Posterior vena cava (tissue), 2 donors: ENCODE measurements at regions of chr1 and their contacts with region 1.

Region 1: GRCh38 chr1:111507411-111508201 is 4.2 kb upstream of the ADORA3 start:
- DNase-seq: peak; percentile 94

Region 2: DNA sequence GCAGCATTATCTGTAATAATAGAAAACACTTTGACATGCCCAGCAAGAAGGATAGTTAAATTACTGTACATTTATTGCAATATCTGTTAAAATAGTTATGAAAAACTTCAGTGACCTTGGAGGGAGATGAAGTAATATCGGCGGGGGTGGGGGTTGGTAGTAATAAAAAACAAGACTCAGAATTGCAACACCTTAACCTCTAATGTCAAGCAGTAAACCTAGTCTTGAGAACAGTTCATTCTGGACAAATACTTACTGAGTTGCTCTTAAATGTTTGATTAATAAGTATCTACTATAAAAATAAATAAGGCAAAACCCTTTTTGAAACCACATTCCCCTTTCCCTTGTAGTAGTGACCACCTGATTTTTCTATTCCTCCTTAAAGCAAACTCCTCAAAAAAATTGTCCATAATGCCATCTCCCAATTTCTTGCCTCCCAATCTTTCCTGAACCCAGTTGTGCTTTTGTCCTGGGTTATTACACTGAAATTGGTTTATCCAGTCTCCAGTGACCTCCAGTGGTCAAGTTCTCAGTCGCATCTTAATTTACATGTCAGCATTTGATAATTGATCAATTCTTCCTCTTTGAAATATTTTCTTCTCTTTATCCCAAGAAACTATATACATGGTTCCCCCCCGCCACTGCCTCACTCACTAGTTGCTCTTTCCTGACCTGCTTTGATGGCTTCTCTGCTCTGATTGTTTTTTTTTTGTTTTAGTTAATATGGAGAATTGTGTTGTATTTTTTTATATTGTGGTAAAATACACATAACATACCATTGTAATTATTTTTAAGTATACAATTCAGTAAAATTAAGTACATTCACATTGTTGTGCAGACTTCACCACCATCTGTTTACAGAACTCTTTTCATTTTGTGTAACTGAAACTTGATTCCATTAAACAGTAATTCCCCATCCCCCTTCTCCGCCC is 148.7 kb after region 1 on chr1:
- intact Hi-C with region 1: loop called in 1 of 2 experiments (anchors 5 kb)
- DNase-seq: no peak

Region 3: DNA sequence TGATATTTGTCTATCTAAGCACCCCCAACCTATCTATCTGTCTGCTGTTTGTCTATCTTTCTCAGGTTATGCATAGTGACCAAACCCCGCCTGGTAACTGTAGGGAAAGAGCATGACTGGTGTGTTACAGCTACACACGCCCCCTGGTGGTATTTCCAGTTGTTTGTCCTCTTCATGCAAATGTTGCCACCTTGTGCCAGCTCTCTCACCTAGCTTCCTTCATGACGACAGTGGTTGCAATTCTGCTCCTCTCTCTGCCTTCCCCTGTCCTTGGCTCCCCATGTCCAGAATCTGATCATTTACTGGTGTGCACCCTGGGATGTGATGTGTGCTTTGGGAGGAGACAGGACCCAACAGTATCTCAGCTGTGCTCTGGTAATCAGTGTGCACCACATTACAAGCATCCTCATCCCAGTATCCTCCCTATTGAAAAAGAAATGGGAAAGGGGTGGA is 239.7 kb after region 1 on chr1:
- intact Hi-C with region 1: loop called in 1 of 2 experiments (anchors 10 kb)
- DNase-seq: no peak